Gastrocnemius medialis (tissue), 4 donors: ENCODE measurements at regions of chr2 and their contacts with region 1.

Region 1: DNA sequence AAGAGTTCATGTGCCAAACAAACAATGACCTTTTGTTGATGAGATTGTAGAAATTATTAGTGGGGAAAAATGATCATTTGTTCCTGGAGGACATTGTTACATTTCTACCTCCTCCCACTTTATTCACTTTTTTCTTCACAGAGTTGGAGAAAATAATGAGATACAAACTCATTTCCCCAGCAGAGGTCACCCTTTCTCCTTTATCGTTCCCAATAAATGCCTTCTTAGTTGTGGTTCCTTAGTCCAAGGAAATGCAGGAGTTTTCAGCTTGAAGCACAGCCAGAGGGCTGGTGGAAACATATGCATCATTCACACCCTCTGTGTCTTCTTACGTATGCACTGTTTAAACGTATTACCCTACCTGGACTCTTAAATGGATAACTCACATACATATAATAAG is 108.8 kb downstream of the SLC4A3 start:
- DNase-seq: no peak
- ATAC-seq: peak in 1 of 2 donors; percentile 23
- H3K4me3 ChIP-seq: no peak overlapping the region
- H3K27ac ChIP-seq: no peak overlapping the region
- H3K4me1 ChIP-seq: peaks cover 0 to 5% of the 10 kb centered on the region in 2 donors
- H3K27me3 ChIP-seq: no peaks in the 10 kb centered on the region
- CTCF ChIP-seq: peak in 4 of 5 experiments; percentile 16 to 46 (median 34)
- POLR2A ChIP-seq: no peak

Region 2: GRCh38 chr2:219836647-219837177 is 100.5 kb after region 1 on chr2:
- in situ Hi-C with region 1: no loop called
- intact Hi-C with region 1: loop called (anchors 5 kb)
- DNase-seq: no peak
- ATAC-seq: no peak
- H3K4me3 ChIP-seq: no peak overlapping the region
- H3K27ac ChIP-seq: no peak overlapping the region
- H3K4me1 ChIP-seq: no peaks in the 10 kb centered on the region
- H3K27me3 ChIP-seq: no peaks in the 10 kb centered on the region
- CTCF ChIP-seq: peak in 1 of 5 experiments; percentile 22
- POLR2A ChIP-seq: no peak

Region 3: DNA sequence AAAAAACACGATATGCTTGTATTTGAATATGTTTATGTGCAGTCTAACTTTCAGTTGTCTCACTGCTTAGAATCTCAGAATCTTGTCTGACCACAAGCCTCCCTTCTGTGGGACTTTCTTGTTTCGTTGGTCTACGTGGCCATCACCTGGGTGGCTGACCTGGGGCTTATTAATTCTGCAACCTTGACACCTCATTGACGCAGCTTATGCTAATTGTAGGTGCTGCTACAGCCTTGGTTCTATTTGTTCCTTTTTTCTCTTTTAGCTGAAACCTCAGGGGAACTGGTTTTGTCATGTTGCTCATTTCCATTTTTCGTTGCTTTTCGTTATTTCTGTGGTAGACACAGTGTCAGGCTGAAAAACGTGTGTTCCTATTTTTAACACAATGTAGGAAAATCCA is 164.9 kb after region 1 on chr2:
- in situ Hi-C with region 1: no loop called
- intact Hi-C with region 1: no loop called
- DNase-seq: no peak
- ATAC-seq: no peak
- H3K4me3 ChIP-seq: no peak overlapping the region
- H3K27ac ChIP-seq: no peak overlapping the region
- H3K4me1 ChIP-seq: no peaks in the 10 kb centered on the region
- H3K27me3 ChIP-seq: no peaks in the 10 kb centered on the region
- CTCF ChIP-seq: no peak
- POLR2A ChIP-seq: no peak

Region 4: DNA sequence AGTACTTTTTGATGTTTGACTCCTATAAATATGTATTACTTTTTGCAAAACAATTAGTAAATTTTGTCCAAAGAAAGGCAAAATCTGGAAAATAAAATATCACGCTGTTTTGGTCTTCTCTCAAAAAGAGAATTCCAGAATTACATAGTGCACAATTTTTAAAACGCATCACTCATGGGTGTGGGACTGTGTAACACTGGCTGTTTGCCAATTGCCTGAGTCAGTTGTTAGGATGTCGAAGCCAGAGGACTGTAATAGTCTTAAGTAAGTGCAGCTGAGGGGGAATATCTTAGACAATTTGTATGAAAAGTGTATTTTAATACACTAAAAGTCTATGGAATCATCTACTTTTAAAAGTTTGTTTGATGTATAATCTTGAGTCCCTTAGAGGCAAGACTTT is 1860.0 kb after region 1 on chr2:
- in situ Hi-C with region 1: loop called in 2 of 4 experiments (anchors 25 kb)
- intact Hi-C with region 1: no loop called
- DNase-seq: no peak
- ATAC-seq: no peak
- H3K4me3 ChIP-seq: no peak overlapping the region
- H3K27ac ChIP-seq: no peak overlapping the region
- H3K4me1 ChIP-seq: no peaks in the 10 kb centered on the region
- H3K27me3 ChIP-seq: no peaks in the 10 kb centered on the region
- CTCF ChIP-seq: no peak
- POLR2A ChIP-seq: no peak